Activated CD4-positive, alpha-beta T cell treated with anti-CD3 and anti-CD28 coated beads, Interleukin-2, amount 10 ng/mL, durations not matched to agents 7 days and 5 days (primary cell): ENCODE measurements at regions of chr9 and their contacts with region 1.

Region 1: DNA sequence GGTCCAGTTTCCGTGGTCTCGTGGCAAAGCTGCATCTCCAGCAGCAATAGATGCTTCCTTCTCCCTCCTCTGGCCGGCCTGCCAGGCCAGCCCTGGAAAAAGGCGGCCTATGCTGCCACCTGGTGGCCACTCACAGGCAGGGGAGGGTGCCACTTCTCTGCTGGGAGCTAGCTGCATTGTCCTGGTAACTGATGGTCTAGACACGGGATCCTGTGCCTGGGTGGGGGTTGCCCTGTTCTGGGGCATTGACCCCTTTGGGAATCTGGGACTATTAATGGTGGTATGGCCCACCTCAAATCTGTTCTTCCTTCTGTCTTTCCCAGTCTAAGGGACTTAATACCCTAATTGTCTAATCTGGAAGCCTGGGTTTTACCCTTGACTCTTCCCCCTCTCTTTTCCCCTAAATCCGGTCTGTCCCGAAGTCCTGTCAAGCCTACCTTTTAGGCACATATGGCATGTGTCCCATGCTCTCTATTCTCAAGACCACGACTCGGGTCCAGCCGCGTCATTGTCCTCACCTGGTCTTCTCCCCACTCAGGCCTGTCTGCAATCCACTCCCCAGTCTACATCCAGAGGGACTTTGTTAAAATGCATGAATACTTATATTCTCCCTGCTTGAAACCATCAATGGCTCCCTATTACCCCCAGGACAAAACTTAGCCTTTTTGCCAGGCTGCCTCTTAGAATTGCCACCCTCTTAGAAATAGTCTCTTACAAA is 20.0 kb upstream of the PTGS1 start:
- DNase-seq: peak; percentile 79
- H3K4me3 Mint-ChIP-seq: no peak overlapping the region
- H3K27ac Mint-ChIP-seq: no peak overlapping the region
- H3K4me1 Mint-ChIP-seq: peaks cover 18% of the 10 kb centered on the region
- H3K27me3 Mint-ChIP-seq: peaks cover 26% of the 10 kb centered on the region

Region 2: DNA sequence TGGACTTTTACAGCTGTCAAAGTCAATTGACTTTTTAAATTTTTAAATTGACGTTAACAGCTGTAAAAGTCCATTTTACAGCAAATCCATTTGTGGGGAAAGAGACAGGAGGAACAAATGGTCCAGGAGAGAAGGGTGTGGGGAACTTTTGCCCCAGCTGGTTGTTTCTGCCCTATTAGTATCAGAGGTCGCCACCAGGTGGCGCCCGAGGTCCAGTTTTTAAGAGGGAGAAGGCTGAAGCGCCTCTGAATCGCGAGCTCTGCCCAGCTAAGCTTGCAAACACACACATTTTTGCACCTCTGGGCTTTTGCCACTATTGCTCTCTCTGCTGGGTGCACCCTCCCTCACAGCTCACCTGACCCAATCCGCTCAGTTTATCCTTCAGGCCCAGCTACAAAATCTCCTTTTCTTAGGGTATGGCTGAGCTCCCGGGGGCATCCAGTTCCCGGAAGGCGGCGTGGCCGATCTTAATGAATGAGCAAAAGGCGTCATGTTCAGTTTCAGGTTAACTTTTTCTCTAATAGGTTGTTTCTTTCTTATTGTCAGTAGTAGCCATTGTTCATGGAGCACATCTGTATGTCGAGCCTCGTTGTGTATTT is 251.4 kb before region 1 on chr9:
- CTCF ChIA-PET with region 1: interaction called, 16 read pairs
- POLR2A ChIA-PET with region 1: no interaction called
- DNase-seq: peak; percentile 85
- H3K4me3 Mint-ChIP-seq: no peak overlapping the region
- H3K27ac Mint-ChIP-seq: no peak overlapping the region
- H3K4me1 Mint-ChIP-seq: peaks cover 14% of the 10 kb centered on the region
- H3K27me3 Mint-ChIP-seq: peaks cover 19% of the 10 kb centered on the region

Region 3: DNA sequence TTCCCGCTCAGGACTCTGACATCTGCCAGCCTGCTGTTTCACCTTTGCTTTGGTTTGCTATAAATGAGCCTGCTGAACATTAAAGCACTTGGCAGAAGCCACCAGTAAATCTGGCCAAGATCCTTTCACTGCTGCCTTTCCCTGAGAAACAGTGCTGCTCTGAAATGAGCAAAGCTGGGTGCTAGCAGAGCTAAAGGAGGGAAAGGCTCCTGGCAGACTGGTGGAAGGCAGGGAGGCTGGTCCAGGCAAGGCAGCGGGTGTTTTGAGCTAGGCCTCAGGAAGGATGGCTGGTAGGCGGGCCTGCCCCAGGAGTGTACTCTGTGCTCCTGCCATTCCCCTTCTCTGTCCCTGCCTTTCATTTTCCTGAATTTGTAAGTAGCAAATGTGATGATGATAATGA is 32.5 kb before region 1 on chr9:
- CTCF ChIA-PET with region 1: no interaction called
- POLR2A ChIA-PET with region 1: no interaction called
- DNase-seq: no peak
- H3K4me3 Mint-ChIP-seq: no peak overlapping the region
- H3K27ac Mint-ChIP-seq: no peak overlapping the region
- H3K4me1 Mint-ChIP-seq: no peaks in the 10 kb centered on the region
- H3K27me3 Mint-ChIP-seq: no peaks in the 10 kb centered on the region

Region 4: GRCh38 chr9:122338994-122339393 is 11.8 kb before region 1 on chr9:
- CTCF ChIA-PET with region 1: interaction called, 12 read pairs
- POLR2A ChIA-PET with region 1: no interaction called
- DNase-seq: no peak
- H3K4me3 Mint-ChIP-seq: no peak overlapping the region
- H3K27ac Mint-ChIP-seq: no peak overlapping the region
- H3K4me1 Mint-ChIP-seq: no peaks in the 10 kb centered on the region
- H3K27me3 Mint-ChIP-seq: peaks cover 1% of the 10 kb centered on the region